ENCODE measurements at regions of chrX and their contacts with region 1.

Region 1: GRCh38 chrX:30822068-30822681 is 66.9 kb downstream of the TAB3 start:
- DNase-seq: peak; percentile 51
- H3K4me3 ChIP-seq: no peak overlapping the region
- H3K27ac ChIP-seq: peak overlapping the region; percentile 43
- H3K4me1 ChIP-seq: peaks cover 22% of the 10 kb centered on the region
- CTCF ChIP-seq: peak; percentile 51

Region 2: GRCh38 chrX:30889147-30890140 is 67.3 kb after region 1 on chrX and contains the start of gene TAB3:
- CTCF ChIA-PET with region 1: no interaction called
- POLR2A ChIA-PET with region 1: interaction called, 3 read pairs
- intact Hi-C with region 1: loop called (anchors 5 kb)
- DNase-seq: peak; percentile 96
- H3K4me3 ChIP-seq: peak within 1 kb of the TSS; percentile 95
- H3K27ac ChIP-seq: peak within 1 kb of the TSS; percentile 61
- H3K4me1 ChIP-seq: peaks cover 11% of the 10 kb centered on the region
- CTCF ChIP-seq: no peak
- total RNA-seq, gene TAB3: 10.3 and 13.8 TPM in 2 replicates